Endothelial cell of umbilical vein (primary cell): ENCODE measurements at regions of chr10 and their contacts with region 1.

Region 1: DNA sequence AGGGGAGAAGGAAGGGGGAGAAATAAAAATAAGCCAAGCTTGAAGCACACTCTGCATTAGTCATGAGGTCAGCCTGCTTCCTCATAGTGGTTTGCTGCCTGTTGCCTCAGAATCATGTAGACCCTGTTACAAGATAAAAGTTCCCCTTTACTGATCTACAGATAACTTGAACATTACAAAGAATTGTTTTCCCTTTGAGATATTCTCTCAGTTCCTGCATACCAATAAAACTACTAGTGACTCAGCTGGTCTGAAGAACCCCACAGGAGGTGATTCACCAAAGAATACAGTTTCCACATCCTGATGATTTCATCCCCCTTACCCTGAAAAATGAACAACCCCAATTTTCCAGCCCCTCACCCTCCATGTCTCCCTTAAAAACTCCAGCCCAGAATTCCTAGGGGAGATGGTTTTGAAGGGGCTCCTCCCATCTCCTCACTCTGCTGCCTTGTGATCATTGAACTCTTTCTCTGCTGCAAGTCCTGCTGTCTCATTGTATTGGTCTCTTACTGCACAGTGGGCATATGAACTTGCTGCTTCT is 31.5 kb upstream of the NRP1 start:
- DNase-seq: peak; percentile 90
- H3K4me3 ChIP-seq: no peak overlapping the region
- H3K27ac ChIP-seq: peak overlapping the region; percentile 92
- H3K4me1 ChIP-seq: peaks cover 37% of the 10 kb centered on the region
- H3K27me3 ChIP-seq: no peaks in the 10 kb centered on the region
- CTCF ChIP-seq: no peak
- POLR2A ChIP-seq: peak; percentile 40

Region 2: DNA sequence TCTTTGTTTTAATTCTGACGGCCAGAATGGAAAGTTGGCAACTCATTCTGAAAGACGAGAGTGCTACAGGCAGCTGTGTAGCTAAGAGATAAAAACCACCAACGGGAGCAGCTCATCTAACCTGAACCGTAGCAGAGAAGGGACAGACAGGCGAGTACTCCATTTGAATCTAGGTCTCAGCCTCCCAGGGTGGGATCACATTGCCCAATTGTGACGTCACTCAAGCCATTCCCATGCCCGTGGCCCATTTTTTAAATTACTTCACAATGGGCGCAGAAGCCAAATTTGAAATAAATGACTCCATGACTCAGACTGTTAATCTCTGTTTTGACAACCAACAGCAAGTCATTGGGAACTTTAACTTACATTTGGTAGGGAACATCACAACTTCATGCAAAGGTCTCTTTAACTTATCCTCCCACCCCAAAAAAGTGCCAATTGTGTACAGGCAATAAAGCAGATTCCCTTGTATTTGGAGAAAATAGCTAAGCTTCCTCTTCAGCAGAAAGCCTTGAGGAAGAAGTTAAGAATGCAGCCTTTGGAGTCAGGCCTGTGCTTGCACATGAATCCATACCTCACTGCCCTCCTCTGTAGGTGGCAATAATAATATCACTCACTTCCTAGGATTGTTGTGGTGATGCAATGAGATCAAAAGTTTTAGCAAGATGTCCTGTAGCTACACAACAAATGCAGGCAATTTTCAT is 1216.5 kb before region 1 on chr10:
- CTCF ChIA-PET with region 1: no interaction called
- POLR2A ChIA-PET with region 1: no interaction called
- dilution Hi-C with region 1: no loop called
- intact Hi-C with region 1: loop called (anchors 10 kb)
- DNase-seq: peak; percentile 72
- H3K4me3 ChIP-seq: no peak overlapping the region
- H3K27ac ChIP-seq: peak overlapping the region; percentile 41
- H3K4me1 ChIP-seq: peaks cover 21% of the 10 kb centered on the region
- H3K27me3 ChIP-seq: no peaks in the 10 kb centered on the region
- CTCF ChIP-seq: no peak
- POLR2A ChIP-seq: no peak

Region 3: GRCh38 chr10:33229252-33229948 is 136.5 kb before region 1 on chr10:
- CTCF ChIA-PET with region 1: no interaction called
- POLR2A ChIA-PET with region 1: no interaction called
- dilution Hi-C with region 1: no loop called
- intact Hi-C with region 1: no loop called
- DNase-seq: peak; percentile 61
- H3K4me3 ChIP-seq: no peak overlapping the region
- H3K27ac ChIP-seq: peak overlapping the region; percentile 46
- H3K4me1 ChIP-seq: peaks cover 69% of the 10 kb centered on the region
- H3K27me3 ChIP-seq: no peaks in the 10 kb centered on the region
- CTCF ChIP-seq: no peak
- POLR2A ChIP-seq: no peak

Region 4: GRCh38 chr10:33336582-33337325 is 29.2 kb before region 1 on chr10:
- CTCF ChIA-PET with region 1: interaction called, 3 read pairs
- POLR2A ChIA-PET with region 1: no interaction called
- dilution Hi-C with region 1: no loop called
- intact Hi-C with region 1: loop called (anchors 1 kb)
- DNase-seq: peak; percentile 66
- H3K4me3 ChIP-seq: peak overlapping the region; percentile 90 to 100 (median 97)
- H3K27ac ChIP-seq: peak overlapping the region; percentile 37
- H3K4me1 ChIP-seq: peaks cover 27% of the 10 kb centered on the region
- H3K27me3 ChIP-seq: no peaks in the 10 kb centered on the region
- CTCF ChIP-seq: no peak
- POLR2A ChIP-seq: peak; percentile 50

Region 5: DNA sequence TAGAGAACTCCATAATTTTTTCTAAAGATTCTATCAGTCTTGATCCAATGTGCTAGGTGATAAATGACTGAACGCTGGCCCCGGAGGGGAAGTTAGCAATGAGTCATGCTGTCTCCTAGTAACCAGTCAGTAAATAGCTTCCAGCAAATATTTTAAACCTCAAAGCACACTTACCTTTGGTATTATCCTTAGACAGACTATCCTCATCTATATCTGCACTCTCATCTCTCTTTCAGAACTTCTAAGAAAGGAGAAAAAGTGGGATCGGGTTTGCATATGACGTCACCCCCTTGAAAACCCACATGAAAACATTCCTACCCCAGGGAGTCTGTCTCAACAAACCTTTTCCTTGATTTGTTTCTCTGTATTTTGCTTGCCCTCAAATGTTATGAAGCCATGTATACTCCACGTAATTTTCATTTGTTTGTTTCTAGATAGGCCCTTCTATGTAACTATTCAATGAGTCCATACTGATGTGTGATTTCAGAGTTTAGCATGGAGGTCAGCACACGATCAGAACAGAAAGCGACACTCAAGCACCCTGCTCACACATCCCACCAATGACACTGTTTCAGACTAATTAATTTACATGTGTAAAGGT is 143.4 kb after region 1 on chr10:
- CTCF ChIA-PET with region 1: no interaction called
- POLR2A ChIA-PET with region 1: no interaction called
- dilution Hi-C with region 1: no loop called
- intact Hi-C with region 1: loop called (anchors 5 kb)
- DNase-seq: peak; percentile 95
- H3K4me3 ChIP-seq: no peak overlapping the region
- H3K27ac ChIP-seq: peak overlapping the region; percentile 68
- H3K4me1 ChIP-seq: peaks cover 14% of the 10 kb centered on the region
- H3K27me3 ChIP-seq: no peaks in the 10 kb centered on the region
- CTCF ChIP-seq: no peak
- POLR2A ChIP-seq: no peak

Region 6: DNA sequence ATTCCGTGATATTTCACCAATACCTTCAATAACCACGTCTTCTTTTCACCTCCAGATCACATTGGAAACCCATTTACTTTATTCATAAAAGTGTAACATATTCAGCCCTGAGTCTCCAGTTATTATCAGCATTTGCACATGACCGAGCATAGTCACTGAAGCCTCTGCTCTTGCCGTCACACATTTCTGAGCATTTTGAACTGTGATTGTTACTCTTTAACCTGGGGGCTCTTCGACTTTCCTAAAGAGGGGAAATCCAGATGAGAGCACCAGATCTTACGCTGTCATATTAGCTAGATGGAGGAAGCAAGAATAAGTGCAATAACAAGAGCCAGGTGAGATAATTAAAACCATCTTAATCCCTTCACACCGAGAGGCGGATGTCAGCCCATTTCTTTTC is 228.5 kb after region 1 on chr10:
- CTCF ChIA-PET with region 1: no interaction called
- POLR2A ChIA-PET with region 1: no interaction called
- dilution Hi-C with region 1: no loop called
- intact Hi-C with region 1: no loop called
- DNase-seq: no peak
- H3K4me3 ChIP-seq: no peak overlapping the region
- H3K27ac ChIP-seq: no peak overlapping the region
- H3K4me1 ChIP-seq: no peaks in the 10 kb centered on the region
- H3K27me3 ChIP-seq: peaks cover 8 to 11% of the 10 kb centered on the region in 2 experiments
- CTCF ChIP-seq: no peak
- POLR2A ChIP-seq: no peak